ENCODE measurements at regions of chr1 and their contacts with region 1.

Region 1: DNA sequence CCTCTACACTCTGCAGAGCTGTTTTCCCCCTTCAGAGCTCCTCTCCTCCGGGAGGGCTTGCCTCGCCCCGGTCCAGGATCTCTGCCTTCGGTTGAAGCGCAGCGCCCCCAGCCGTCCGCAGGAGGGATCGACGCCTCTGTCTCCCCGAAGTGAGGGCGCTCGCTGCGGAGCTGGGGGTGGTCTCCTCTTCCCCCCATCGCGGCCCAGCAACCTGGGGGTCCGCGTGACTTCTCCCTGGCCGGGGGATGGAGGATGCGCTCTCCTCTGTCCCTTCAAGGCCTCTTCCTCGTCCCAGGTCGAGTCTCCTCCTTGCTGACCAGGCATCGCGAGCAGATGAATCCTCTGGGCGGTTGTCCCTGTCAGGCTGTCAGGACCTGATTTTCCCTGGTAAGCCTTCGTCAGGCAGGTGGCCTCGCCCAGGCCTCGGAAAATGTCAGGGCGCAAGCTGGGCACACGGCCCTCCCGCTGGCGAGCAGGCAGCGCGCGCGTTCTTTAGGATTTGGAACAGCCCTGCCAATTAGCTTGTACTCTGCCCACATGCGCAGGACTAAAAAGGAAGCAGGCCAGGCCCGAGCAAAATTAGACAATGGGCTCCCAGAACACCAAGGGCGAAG is 90.5 kb downstream of the EDEM3 start:
- DNase-seq: no peak
- H3K4me3 ChIP-seq: peak overlapping the region; percentile 54
- CTCF ChIP-seq: peak; percentile 99

Region 2: GRCh38 chr1:184222652-184223052 is 441.5 kb before region 1 on chr1:
- CTCF ChIA-PET with region 1: interaction called, 15 read pairs
- POLR2A ChIA-PET with region 1: no interaction called
- DNase-seq: no peak
- H3K4me3 ChIP-seq: no peak overlapping the region
- CTCF ChIP-seq: peak; percentile 78

Region 3: GRCh38 chr1:184383772-184384323 is 280.3 kb before region 1 on chr1:
- CTCF ChIA-PET with region 1: interaction called, 10 read pairs
- POLR2A ChIA-PET with region 1: no interaction called
- DNase-seq: no peak
- H3K4me3 ChIP-seq: no peak overlapping the region
- CTCF ChIP-seq: no peak

Region 4: GRCh38 chr1:184567642-184568041 is 96.5 kb before region 1 on chr1:
- CTCF ChIA-PET with region 1: interaction called, 15 read pairs
- POLR2A ChIA-PET with region 1: no interaction called
- DNase-seq: peak; percentile 21
- H3K4me3 ChIP-seq: no peak overlapping the region
- CTCF ChIP-seq: no peak

Region 5: GRCh38 chr1:184632415-184633175 is 31.6 kb before region 1 on chr1:
- CTCF ChIA-PET with region 1: interaction called, 12 read pairs
- POLR2A ChIA-PET with region 1: no interaction called
- DNase-seq: no peak
- H3K4me3 ChIP-seq: no peak overlapping the region
- CTCF ChIP-seq: no peak

Region 6: GRCh38 chr1:184649451-184649888 is 14.7 kb before region 1 on chr1:
- CTCF ChIA-PET with region 1: interaction called, 62 read pairs
- POLR2A ChIA-PET with region 1: no interaction called
- DNase-seq: no peak
- H3K4me3 ChIP-seq: no peak overlapping the region
- CTCF ChIP-seq: no peak